ENCODE measurements at regions of chr5 and their contacts with region 1.

Region 1: DNA sequence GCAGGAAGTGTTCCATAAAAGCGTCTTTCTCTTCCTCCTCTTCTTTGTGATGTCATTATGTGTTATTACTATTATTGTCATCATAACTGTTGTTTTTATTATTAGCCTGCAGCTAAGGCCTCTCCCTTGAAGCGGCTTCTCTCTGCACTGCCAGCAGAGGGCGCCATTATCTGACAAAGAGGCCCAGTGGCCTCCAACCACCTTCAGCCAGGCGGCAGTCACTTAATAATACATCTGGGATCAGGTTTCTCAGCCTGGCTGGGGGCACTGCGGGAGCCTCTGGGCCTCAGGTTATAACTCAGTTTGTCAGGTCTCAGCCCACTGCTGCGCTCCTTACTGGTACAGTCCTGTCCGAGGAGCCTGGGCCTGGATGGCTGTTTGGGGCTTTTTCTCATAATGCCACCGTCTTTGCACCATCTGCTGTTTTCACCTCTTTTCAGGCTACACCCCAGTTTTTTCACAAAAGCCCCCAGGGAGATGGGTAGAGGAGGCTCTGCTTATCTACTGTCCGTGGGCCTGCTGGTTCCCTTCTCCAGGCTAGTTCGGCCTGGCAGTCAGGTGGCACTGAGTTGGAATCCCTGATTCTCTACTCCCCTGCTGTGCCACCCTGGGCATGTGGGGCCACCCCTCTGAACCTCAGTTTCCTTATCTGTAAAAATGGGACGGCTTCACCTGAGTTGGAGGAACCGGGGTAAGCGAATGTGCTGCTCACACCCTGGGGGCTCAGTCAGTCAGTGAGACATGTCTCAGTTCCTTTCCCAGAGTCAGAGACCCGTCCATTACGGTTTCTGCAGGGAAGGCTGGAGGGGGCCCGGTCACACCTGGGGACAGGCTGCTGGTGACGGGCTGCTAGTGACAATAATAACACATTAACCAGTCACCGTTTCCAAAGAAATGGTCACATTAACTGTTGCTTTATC is 282.1 kb downstream of the NSG2 start:
- DNase-seq: no peak

Region 2: DNA sequence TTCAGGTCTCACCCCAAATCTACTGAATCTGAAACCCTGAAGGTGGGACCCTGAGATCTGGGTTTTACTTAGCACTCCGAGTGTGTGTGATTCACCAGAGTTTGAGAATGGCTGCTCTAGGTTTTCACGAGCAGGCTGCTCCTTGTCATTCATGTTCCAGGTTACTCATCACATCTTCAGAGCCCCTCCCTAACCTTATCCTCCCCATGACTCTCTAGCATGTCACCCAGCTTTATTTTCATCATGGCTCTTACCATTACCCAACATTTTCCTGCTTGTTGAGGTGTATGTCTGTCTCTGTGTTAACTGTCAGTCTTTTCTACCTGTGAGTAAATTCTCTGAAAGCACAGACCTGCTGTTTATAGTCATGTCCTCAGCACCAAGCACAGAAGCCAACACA is 37.1 kb after region 1 on chr5:
- intact Hi-C with region 1: no loop called
- DNase-seq: no peak

Region 3: DNA sequence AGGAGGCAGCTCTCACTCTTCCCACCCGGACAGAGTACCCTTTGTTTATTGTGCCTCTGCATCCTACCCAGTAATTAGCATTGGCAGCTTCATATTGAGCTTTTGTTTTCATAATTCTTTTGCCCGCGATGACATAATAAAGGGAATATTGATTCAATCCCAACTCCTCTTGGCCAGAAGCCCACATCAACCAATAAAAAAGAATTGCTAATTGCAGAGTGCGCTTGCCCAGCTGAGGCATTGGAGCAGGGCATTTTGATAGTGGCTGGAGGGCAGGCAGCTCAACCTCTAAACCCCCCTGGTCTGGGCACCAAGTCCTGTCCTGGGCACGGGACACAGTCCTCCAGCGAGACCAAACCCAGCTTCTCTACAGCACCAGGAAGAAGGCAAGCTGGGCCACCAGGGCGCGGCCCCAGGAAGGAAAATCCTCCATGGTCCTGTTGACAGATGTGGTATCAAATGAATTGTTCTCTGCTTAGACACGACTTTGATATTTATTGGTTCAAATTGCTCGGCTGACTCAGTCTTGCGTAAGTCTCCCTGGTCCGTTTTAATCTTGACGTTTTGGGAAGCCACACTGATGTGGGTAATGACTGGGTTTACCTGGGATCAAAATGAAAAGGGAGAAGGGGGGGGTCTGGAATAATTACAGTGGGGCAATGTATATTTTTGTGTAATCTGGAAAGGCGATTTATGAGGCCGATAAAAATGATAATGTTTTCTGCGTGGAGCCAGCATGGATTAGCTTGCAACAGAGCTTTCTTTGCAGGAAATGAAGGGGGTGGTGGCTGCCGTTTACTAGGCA is 176.1 kb after region 1 on chr5:
- intact Hi-C with region 1: no loop called
- DNase-seq: no peak

Region 4: DNA sequence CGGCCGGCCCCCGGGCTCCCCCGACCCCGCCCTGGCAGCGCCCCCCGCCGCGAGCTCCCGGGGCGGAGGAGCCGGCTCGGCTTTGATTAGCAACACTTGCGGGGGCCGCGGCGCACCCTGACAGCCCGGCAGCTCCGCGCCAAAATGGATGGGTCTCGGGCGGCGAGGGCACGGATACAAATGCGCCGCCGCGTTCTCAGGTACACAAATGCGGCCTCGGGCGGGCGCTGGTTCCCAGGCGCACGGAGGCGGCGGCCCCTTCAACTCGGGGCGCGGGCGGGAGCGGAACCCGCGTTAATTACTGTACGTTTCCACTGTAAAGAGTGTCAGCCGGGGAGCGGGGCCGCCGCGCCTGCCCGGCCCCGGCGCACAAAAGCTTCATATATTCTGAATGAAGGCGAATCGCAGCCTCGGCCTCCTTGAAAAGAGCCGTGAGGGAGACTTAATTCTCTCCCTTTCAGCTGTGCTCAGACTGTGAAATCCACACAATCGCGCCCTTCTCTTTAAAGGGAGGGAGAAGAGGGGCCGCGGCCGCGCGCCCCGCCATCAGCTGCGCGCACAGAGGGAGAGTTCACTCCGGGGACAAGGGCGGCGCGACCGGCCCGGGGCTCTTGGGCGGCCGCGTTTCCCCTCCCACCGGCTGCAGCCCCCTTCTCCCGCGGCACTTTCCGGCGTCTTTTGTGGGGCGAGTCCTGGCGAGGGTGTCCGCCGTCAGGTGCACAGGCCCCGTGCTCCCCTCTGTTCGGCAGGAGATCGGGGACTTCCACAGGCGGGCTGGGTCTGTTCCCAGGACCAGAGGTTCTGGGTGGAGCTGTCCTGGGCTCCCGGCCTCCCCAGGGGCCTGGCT is 423.8 kb after region 1 on chr5:
- intact Hi-C with region 1: no loop called
- DNase-seq: no peak

Region 5: GRCh38 chr5:174793684-174794328 is 466.2 kb after region 1 on chr5:
- intact Hi-C with region 1: loop called (anchors 5 kb)
- DNase-seq: no peak

Measured in cardiac septum (tissue), 1 donor.